Activated CD4-positive, alpha-beta T cell treated with anti-CD3 and anti-CD28 coated beads, Interleukin-2, amount 10 ng/mL, durations not matched to agents 24 days and 14 days (primary cell): ENCODE measurements at regions of chr9 and their contacts with region 1.

Region 1: DNA sequence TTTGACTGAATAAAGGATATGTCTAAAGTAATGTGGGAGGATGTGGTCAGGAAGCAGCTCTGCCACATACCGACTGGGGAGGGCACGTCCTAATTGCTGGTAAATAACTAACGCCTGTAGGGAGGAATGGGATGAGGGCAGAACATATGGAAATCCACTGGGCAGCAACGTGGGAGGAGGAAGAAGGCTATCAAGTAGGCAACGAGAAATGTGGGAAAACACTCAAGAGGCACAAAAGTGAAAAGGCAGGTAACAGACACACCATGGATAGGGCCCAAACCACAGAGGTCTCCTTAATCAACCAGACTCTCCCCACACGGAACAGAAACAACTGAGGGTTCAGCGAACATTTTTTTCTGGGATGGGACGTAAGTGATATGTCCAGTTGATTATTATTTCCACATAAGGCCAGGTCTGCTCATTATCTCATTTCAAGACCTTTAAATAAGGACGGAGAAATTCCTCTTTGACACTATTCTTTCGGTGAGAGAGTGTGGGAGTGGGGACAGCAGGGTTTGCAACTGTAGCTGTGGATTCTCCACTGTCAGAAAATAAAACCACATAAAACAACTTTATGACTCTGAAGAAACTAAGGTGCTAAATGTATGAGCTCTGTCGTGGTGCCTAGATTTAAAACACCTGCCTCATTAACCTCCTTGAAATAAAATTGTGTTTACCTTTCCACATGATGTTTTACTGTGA is 17.0 kb downstream of the IARS1 start:
- DNase-seq: peak; percentile 58
- H3K4me3 Mint-ChIP-seq: peak overlapping the region; percentile 75
- H3K27ac Mint-ChIP-seq: peak overlapping the region; percentile 87
- H3K4me1 Mint-ChIP-seq: peaks cover 20% of the 10 kb centered on the region
- H3K27me3 Mint-ChIP-seq: no peaks in the 10 kb centered on the region

Region 2: DNA sequence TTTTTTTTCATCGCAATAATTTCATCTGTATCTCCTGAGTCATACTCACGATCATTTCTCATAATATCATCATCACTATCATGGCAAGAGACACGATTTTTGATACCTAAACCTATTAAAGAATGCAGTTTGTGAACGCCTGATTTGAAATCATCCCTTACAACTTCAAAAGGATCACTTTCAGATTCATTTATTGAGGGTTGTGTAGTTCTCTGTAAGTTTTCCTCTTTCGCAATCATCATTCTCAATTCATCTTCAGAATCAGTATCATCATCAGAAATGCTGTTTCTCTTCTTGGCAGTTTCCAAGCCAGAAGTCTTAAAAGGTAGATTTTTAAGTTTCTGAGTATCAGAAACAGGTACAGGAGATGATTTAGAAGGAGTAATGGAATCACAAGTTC is 39.0 kb after region 1 on chr9:
- intact Hi-C with region 1: loop called (anchors 5 kb)
- DNase-seq: no peak
- H3K4me3 Mint-ChIP-seq: no peak overlapping the region
- H3K27ac Mint-ChIP-seq: no peak overlapping the region
- H3K4me1 Mint-ChIP-seq: peaks cover 24% of the 10 kb centered on the region
- H3K27me3 Mint-ChIP-seq: no peaks in the 10 kb centered on the region